Activated naive CD4-positive, alpha-beta T cell treated with anti-CD3 and anti-CD28 coated beads for 36 hours (primary cell): ENCODE measurements at regions of chr1 and their contacts with region 1.

Region 1: DNA sequence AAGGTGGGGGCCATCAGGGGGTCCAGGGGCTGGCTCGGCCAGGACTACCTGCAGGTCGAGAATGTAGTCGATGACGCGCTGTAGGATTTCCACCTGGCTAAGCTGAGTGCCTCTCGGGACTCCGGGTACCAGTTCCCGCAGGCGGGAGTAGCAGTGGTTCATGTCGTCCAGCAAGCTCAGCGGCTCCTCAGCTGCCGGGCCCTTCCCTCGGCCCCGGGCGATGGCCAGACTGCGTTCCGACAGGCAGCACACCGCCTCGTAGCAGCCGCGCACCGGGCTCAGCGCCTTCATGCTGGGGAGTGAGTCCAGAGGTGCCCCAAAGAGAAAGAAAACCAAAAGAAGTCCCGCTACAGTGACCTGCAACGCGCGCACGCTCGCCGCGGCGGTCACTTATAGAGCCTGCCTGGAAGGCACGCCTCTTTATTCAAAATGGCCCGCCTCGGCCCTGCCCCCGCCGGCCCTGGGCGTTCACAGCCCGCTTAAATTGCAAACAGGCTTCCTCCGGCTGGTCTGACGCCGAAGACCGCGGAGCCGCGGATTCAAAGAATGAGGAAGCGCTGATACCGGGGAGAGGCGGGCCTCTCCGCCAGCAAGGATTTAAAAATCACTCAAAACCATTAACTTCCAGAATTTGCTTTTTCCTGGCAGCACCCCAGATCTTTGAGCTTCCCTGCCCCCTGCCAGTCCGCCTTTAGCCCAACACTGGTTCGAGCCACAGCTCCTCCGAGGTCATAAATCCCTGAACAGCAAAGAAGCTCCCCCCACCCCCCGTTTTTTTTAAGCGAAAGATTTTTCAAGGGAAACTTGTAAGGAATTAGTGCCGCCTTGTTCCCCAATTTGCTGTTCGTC is at the start of gene ID3:
- DNase-seq: peak; percentile 94
- H3K4me3 Mint-ChIP-seq: peak within 1 kb of the TSS; percentile 82
- H3K27ac Mint-ChIP-seq: peak within 1 kb of the TSS; percentile 84
- H3K4me1 Mint-ChIP-seq: peaks cover 62% of the 10 kb centered on the region
- H3K27me3 Mint-ChIP-seq: peaks cover 3% of the 10 kb centered on the region
- total RNA-seq, gene ID3: 69.5 to 74.6 TPM

Region 2: GRCh38 chr1:23591460-23592208 is 32.3 kb after region 1 on chr1:
- CTCF ChIA-PET with region 1: interaction called, 7 read pairs
- intact Hi-C with region 1: loop called (anchors 1 kb)
- DNase-seq: peak; percentile 88
- H3K4me3 Mint-ChIP-seq: peak overlapping the region; percentile 34
- H3K27ac Mint-ChIP-seq: peak overlapping the region; percentile 85
- H3K4me1 Mint-ChIP-seq: peaks cover 68% of the 10 kb centered on the region
- H3K27me3 Mint-ChIP-seq: no peaks in the 10 kb centered on the region

Region 3: GRCh38 chr1:23619299-23620188 is 60.2 kb after region 1 on chr1:
- CTCF ChIA-PET with region 1: interaction called, 6 read pairs
- intact Hi-C with region 1: loop called (anchors 1 kb)
- DNase-seq: peak; percentile 91
- H3K4me3 Mint-ChIP-seq: peak overlapping the region; percentile 67
- H3K27ac Mint-ChIP-seq: peak overlapping the region; percentile 69
- H3K4me1 Mint-ChIP-seq: peaks cover 84% of the 10 kb centered on the region
- H3K27me3 Mint-ChIP-seq: no peaks in the 10 kb centered on the region

Region 4: DNA sequence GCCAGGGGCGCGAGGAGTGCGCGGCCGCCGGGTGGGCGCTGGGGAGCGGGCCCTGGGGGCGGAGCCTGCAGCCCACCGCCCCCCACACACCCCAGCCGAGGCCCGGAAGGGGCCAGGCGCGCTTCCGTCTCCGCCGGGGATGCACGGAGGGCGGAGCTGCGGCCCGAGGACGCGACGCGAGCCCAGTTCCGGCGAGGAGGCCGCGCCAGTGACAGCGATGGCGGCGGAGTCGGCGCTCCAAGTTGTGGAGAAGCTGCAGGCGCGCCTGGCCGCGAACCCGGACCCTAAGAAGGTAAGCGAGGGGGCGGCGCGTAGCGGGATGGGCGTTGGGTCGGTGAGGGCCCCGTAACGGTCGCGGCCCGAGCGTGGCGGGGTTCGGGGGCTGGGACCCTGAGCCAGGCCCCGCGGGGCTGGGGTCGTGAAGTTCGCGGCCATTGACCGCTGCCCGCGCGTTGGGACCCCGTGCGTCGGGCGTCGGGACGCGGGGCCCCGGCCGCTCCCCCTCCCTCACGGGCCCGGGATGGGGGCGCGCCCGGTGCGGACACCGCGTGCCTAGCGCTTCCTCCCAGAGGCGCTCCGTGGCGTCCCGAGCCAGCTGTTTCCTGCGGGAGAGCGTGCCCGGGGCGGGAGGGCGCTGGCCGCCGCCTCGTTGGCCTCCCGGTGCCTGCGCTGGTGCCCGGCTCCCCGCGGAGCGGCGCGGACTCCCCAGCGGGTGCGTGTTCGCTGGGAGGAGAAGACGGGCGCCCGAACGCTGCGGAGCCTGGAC is 184.1 kb after region 1 on chr1 and contains the start of gene ELOA:
- CTCF ChIA-PET with region 1: no interaction called
- intact Hi-C with region 1: loop called (anchors 5 kb)
- DNase-seq: peak; percentile 79
- H3K4me3 Mint-ChIP-seq: peak within 1 kb of the TSS; percentile 88
- H3K27ac Mint-ChIP-seq: peak within 1 kb of the TSS; percentile 85
- H3K4me1 Mint-ChIP-seq: peaks cover 42% of the 10 kb centered on the region
- H3K27me3 Mint-ChIP-seq: no peaks in the 10 kb centered on the region
- total RNA-seq, gene ELOA: 21.8 to 22.6 TPM

Region 5: DNA sequence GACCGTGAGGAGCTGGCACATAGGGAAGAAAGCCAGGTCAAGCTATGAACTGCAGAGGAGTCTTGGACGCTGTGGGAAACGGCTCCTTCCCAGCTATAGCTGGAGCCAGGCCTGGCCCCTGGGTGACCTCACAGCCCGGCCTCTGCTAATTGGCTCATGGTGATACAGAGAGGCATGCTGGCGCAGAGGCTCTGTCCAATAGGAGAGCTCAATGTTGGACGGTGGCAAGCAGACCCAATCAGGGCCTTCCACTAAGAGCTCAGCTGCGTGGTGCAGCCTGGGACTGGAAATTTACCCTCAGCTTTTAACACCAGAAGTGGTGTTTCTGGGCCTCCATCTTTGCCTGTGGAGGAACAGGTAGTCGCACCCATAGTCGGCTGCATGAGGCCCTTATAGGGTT is 695.4 kb after region 1 on chr1:
- CTCF ChIA-PET with region 1: no interaction called
- intact Hi-C with region 1: no loop called
- DNase-seq: no peak
- H3K4me3 Mint-ChIP-seq: no peak overlapping the region
- H3K27ac Mint-ChIP-seq: no peak overlapping the region
- H3K4me1 Mint-ChIP-seq: no peaks in the 10 kb centered on the region
- H3K27me3 Mint-ChIP-seq: no peaks in the 10 kb centered on the region